Natural killer cell (primary cell): ENCODE measurements at regions of chr9 and their contacts with region 1.

Region 1: GRCh38 chr9:35616681-35617459 is 1.3 kb downstream of the CD72 start:
- DNase-seq: peak; percentile 85 to 86
- ATAC-seq: peak; percentile 73 to 82 (median 80)
- H3K4me3 ChIP-seq: peak overlapping the region; percentile 55
- H3K4me3 Mint-ChIP-seq: peak overlapping the region; percentile 96
- H3K27ac ChIP-seq: peak overlapping the region; percentile 97
- H3K27ac Mint-ChIP-seq: peak overlapping the region; percentile 98 to 99
- H3K4me1 ChIP-seq: peaks cover 52% of the 10 kb centered on the region
- H3K4me1 Mint-ChIP-seq: peaks cover 59 to 65% of the 10 kb centered on the region in 2 donors
- H3K27me3 ChIP-seq: no peaks in the 10 kb centered on the region
- H3K27me3 Mint-ChIP-seq: no peaks in the 10 kb centered on the region
- CTCF ChIP-seq: no peak

Region 2: DNA sequence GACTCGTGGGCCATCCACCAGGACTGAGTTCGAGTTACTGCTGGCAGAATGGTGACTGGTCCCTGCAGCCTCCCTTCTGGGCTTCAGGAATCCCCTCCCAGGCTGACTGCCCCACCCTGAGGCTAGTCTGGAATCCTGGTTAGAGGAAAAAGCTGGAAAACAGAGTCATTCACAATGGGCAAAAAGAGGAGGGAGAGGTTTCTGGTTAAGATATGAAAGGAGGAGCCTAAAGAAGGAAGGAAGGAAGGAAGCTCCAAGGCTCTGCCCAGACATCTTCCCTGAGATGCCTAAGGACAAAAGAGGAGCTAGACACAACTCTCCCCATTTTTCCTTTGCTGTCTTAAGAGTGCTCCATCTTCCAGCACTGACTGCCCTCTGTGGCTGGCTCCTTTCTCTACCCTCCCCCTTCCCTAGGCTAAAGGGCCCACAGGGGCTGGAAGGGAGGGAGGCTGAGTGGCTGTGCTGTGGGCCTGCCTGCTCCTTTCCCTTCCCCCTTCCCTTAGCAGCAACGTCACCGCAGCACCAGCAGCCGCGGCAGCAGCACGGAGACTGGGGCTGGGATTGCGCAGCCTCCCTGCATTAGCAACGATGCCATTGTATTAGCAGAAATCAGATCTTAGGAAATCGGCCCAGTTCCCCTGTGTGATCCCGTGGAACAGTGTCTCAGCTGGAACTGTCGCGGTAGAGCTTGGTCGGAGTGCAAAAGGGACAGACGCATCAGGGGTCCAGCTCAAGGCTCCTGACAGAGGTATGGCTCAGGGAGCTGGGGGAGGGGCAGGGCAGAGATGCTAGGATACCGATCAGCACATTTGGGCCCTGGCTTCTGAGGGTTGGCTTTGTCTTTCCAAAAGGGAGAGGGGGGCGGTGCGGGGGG is 78.3 kb before region 1 on chr9:
- intact Hi-C with region 1: no loop called
- DNase-seq: no peak
- ATAC-seq: no peak
- H3K4me3 ChIP-seq: no peak overlapping the region
- H3K4me3 Mint-ChIP-seq: no peak overlapping the region
- H3K27ac ChIP-seq: no peak overlapping the region
- H3K27ac Mint-ChIP-seq: no peak overlapping the region
- H3K4me1 ChIP-seq: peaks cover 4% of the 10 kb centered on the region
- H3K4me1 Mint-ChIP-seq: no peaks in the 10 kb centered on the region
- H3K27me3 ChIP-seq: no peaks in the 10 kb centered on the region
- H3K27me3 Mint-ChIP-seq: peaks cover 0 to 6% of the 10 kb centered on the region in 2 donors
- CTCF ChIP-seq: no peak

Region 3: GRCh38 chr9:35635730-35636129 is 18.9 kb after region 1 on chr9:
- intact Hi-C with region 1: loop called (anchors 2 kb)
- DNase-seq: no peak
- ATAC-seq: no peak
- H3K4me3 ChIP-seq: no peak overlapping the region
- H3K4me3 Mint-ChIP-seq: peak overlapping the region; percentile 76
- H3K27ac ChIP-seq: peak overlapping the region; percentile 80
- H3K27ac Mint-ChIP-seq: peak overlapping the region; percentile 94 to 97
- H3K4me1 ChIP-seq: peaks cover 42% of the 10 kb centered on the region
- H3K4me1 Mint-ChIP-seq: peaks cover 56 to 57% of the 10 kb centered on the region in 2 donors
- H3K27me3 ChIP-seq: no peaks in the 10 kb centered on the region
- H3K27me3 Mint-ChIP-seq: no peaks in the 10 kb centered on the region
- CTCF ChIP-seq: no peak